ENCODE measurements at regions of chr7 and their contacts with region 1.

Region 1: GRCh38 chr7:124929467-124930172 is at the start of gene POT1:
- DNase-seq: peak; percentile 98 to 99
- ATAC-seq: peak; percentile 100
- H3K4me3 ChIP-seq: peak within 1 kb of the TSS; percentile 27 to 79 (median 66)
- H3K27ac ChIP-seq: peak within 1 kb of the TSS; percentile 55 to 91 (median 86)
- H3K4me1 ChIP-seq: peaks cover 0 to 39% (median 28%) of the 10 kb centered on the region in 9 donors
- H3K27me3 ChIP-seq: no peaks in the 10 kb centered on the region
- CTCF ChIP-seq: no peak
- total RNA-seq, gene POT1: 12.7 to 24.7 (median 15.5) TPM

Region 2: GRCh38 chr7:124791876-124792446 is 137.7 kb before region 1 on chr7:
- intact Hi-C with region 1: no loop called
- DNase-seq: no peak
- ATAC-seq: no peak
- H3K4me3 ChIP-seq: no peak overlapping the region
- H3K27ac ChIP-seq: no peak overlapping the region
- H3K4me1 ChIP-seq: no peaks in the 10 kb centered on the region
- H3K27me3 ChIP-seq: peaks cover 0 to 4% (median 0%) of the 10 kb centered on the region in 7 donors
- CTCF ChIP-seq: no peak

Region 3: DNA sequence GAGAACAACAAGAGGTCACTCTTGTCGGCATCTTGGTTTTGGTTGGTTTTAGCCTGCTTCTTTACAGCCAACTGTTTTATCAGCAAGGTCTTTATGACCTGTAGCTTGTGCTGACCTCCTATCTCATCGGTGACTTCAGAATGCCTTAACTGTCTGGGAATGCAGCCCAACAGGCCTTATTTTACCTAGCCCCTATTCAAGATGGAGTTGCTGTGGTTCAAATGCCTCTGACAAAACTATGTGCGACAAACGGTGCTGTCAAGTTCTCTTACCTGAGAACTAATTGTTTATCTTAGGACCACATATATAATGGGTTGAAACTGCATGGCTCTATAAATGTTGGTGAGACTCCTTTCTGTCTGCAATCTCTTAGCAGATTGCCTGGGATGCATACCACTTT is 35.9 kb after region 1 on chr7:
- intact Hi-C with region 1: loop called in 1 of 10 experiments (anchors 5 kb)
- DNase-seq: no peak
- ATAC-seq: no peak
- H3K4me3 ChIP-seq: no peak overlapping the region
- H3K27ac ChIP-seq: no peak overlapping the region
- H3K4me1 ChIP-seq: no peaks in the 10 kb centered on the region
- H3K27me3 ChIP-seq: no peaks in the 10 kb centered on the region
- CTCF ChIP-seq: no peak

Region 4: GRCh38 chr7:124989911-124990310 is 60.3 kb after region 1 on chr7:
- intact Hi-C with region 1: no loop called
- DNase-seq: no peak
- ATAC-seq: no peak
- H3K4me3 ChIP-seq: no peak overlapping the region
- H3K27ac ChIP-seq: no peak overlapping the region
- H3K4me1 ChIP-seq: peaks cover 0 to 4% (median 0%) of the 10 kb centered on the region in 9 donors
- H3K27me3 ChIP-seq: no peaks in the 10 kb centered on the region
- CTCF ChIP-seq: no peak

Measured in heart right ventricle (tissue), 16 donors.